Activated CD4-positive, alpha-beta T cell treated with anti-CD3 and anti-CD28 coated beads for 36 hours (primary cell): ENCODE measurements at regions of chr19 and their contacts with region 1.

Region 1: GRCh38 chr19:38229585-38230073 is 5.6 kb upstream of the DPF1 start:
- DNase-seq: peak; percentile 87
- ATAC-seq: peak; percentile 96
- H3K4me3 Mint-ChIP-seq: no peak overlapping the region
- H3K27ac Mint-ChIP-seq: no peak overlapping the region
- H3K4me1 Mint-ChIP-seq: peaks cover 8% of the 10 kb centered on the region
- H3K27me3 Mint-ChIP-seq: peaks cover 39% of the 10 kb centered on the region

Region 2: GRCh38 chr19:38142176-38143035 is 87.2 kb before region 1 on chr19:
- CTCF ChIA-PET with region 1: interaction called, 3 read pairs
- POLR2A ChIA-PET with region 1: no interaction called
- intact Hi-C with region 1: loop called in 1 of 2 experiments (anchors 5 kb)
- DNase-seq: peak; percentile 78
- ATAC-seq: peak; percentile 86
- H3K4me3 Mint-ChIP-seq: no peak overlapping the region
- H3K27ac Mint-ChIP-seq: no peak overlapping the region
- H3K4me1 Mint-ChIP-seq: peaks cover 3% of the 10 kb centered on the region
- H3K27me3 Mint-ChIP-seq: no peaks in the 10 kb centered on the region

Region 3: GRCh38 chr19:38245826-38246498 is 16.3 kb after region 1 on chr19:
- CTCF ChIA-PET with region 1: interaction called, 18 read pairs
- POLR2A ChIA-PET with region 1: no interaction called
- intact Hi-C with region 1: no loop called
- DNase-seq: no peak
- ATAC-seq: no peak
- H3K4me3 Mint-ChIP-seq: no peak overlapping the region
- H3K27ac Mint-ChIP-seq: no peak overlapping the region
- H3K4me1 Mint-ChIP-seq: peaks cover 3% of the 10 kb centered on the region
- H3K27me3 Mint-ChIP-seq: peaks cover 2% of the 10 kb centered on the region

Region 4: DNA sequence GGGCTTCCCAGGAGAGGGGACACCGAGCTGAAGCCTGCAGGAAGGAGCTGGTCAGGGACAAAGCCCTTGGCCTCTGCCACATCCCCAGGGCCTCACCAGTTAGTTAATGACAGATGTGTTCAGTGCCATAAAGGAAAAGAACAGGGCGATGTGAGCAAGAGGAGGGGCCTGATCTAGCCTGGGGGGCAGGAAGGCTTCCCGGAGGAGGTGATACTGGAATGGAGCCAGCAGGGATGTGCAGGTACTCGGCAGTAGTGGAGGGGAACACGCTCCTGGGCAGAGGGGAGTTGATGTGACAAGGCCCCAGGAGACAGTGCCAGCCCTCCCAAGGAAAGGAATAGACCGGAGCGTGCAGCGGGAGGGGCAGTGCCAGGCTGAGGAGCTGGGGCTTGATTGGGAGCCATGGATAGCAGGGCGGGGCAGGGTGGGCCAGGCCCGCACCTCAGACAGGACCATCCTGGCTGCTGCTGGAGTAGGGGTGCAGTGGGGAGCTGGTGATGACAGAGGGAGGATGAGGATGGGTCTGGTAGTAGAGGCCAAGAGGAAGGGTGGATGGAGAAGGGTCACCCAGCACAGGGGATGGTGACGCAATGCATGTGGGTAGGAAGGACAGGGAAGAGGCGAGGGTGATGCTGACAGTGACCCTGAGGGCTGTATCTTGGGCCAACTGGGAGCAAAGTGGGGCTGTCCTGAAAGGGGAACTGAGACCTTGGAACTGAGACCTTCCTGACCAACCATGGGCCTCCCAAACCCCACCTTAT is 78.6 kb after region 1 on chr19:
- CTCF ChIA-PET with region 1: no interaction called
- POLR2A ChIA-PET with region 1: no interaction called
- intact Hi-C with region 1: no loop called
- DNase-seq: no peak
- ATAC-seq: no peak
- H3K4me3 Mint-ChIP-seq: no peak overlapping the region
- H3K27ac Mint-ChIP-seq: no peak overlapping the region
- H3K4me1 Mint-ChIP-seq: no peaks in the 10 kb centered on the region
- H3K27me3 Mint-ChIP-seq: no peaks in the 10 kb centered on the region

Region 5: DNA sequence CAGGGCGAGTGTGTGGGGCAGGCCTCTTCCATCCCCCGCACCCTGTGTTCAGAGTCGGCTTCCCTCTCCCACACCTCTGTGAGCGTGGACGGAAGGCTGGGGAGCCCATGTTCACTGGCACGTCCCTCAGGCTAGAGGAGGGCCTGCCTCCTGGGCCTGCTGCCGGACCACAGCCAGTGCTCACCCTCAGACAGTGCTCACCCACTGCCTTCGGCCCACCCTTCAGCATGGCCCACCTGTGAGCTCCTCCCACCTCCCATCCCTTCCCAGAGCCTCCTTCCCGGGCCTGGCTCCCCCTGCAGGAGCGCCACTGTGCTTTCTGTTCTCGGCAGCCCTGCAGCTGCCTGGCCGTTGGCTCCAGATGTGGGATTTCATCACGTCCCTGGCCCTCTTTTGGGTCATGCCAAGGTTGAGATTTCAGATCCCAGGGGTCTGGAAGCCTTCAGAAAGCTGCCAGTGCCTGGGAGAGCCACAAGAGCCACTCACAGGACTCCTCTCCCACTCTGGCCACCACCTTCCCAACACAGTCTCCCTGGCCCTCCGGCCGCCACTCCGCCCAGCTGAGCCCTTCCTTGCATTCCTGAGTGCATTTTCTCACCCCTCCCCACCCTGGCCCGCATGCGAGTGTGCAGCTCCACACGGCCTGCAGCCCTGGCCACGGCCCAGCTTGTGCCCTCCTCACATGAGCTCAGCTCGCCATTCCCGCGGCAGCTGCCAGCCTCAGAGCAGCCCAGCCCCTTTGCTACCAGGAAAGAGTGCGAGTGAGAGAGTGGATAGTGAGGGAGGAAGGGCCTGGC is 489.3 kb after region 1 on chr19:
- CTCF ChIA-PET with region 1: no interaction called
- POLR2A ChIA-PET with region 1: no interaction called
- intact Hi-C with region 1: no loop called
- DNase-seq: no peak
- ATAC-seq: no peak
- H3K4me3 Mint-ChIP-seq: no peak overlapping the region
- H3K27ac Mint-ChIP-seq: no peak overlapping the region
- H3K4me1 Mint-ChIP-seq: no peaks in the 10 kb centered on the region
- H3K27me3 Mint-ChIP-seq: no peaks in the 10 kb centered on the region